ENCODE measurements at regions of chr5 and their contacts with region 1.

Region 1: GRCh38 chr5:153147891-153148623 is 342.4 kb upstream of the GRIA1 start:
- DNase-seq: peak in 1 of 2 experiments; percentile 52
- H3K4me3 ChIP-seq: no peak overlapping the region
- H3K27ac ChIP-seq: no peak overlapping the region
- H3K4me1 ChIP-seq: no peaks in the 10 kb centered on the region
- H3K27me3 ChIP-seq: no peaks in the 10 kb centered on the region
- CTCF ChIP-seq: peak in 2 of 3 experiments; percentile 71 to 80; a peak in 3 of 4 replicates
- EP300 ChIP-seq: no peak
- POLR2A ChIP-seq: no peak
- RAD21 ChIP-seq: peak; percentile 93 to 95

Region 2: DNA sequence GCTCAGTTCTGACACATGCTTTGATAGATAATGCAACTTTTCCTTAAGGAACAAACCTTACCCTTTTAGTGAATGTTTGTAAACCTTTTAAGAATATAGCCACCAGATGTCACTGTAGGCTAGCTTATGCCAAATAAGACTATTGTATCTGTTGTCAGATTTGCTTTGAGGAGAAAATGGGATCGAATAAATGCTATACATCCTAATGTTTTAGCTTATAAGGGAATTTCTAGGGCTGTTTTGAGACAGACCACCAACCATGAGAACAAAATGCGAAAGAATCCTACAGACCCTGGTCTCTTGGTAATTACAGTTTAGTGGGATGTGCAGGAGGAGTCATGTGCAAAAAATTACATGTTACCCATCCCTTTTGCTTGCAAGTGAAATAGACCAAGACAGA is 615.3 kb before region 1 on chr5:
- CTCF ChIA-PET with region 1: interaction called, 11 read pairs
- POLR2A ChIA-PET with region 1: no interaction called
- DNase-seq: no peak
- H3K4me3 ChIP-seq: no peak overlapping the region
- H3K27ac ChIP-seq: no peak overlapping the region
- H3K4me1 ChIP-seq: peaks cover 0 to 15% (median 4%) of the 10 kb centered on the region in 4 experiments; a peak in 5 of 7 replicates
- H3K27me3 ChIP-seq: no peaks in the 10 kb centered on the region
- CTCF ChIP-seq: peak in 2 of 3 experiments; percentile 45 to 46; a peak in 2 of 4 replicates
- EP300 ChIP-seq: no peak
- POLR2A ChIP-seq: no peak
- RAD21 ChIP-seq: peak; percentile 85 to 90

Region 3: GRCh38 chr5:152560512-152561137 is 587.4 kb before region 1 on chr5:
- CTCF ChIA-PET with region 1: interaction called, 34 read pairs
- POLR2A ChIA-PET with region 1: no interaction called
- DNase-seq: peak; percentile 41 to 78
- H3K4me3 ChIP-seq: no peak overlapping the region
- H3K27ac ChIP-seq: no peak overlapping the region
- H3K4me1 ChIP-seq: no peaks in the 10 kb centered on the region
- H3K27me3 ChIP-seq: no peaks in the 10 kb centered on the region
- CTCF ChIP-seq: peak; percentile 77 to 87 (median 85)
- EP300 ChIP-seq: no peak
- POLR2A ChIP-seq: no peak
- RAD21 ChIP-seq: peak; percentile 95 to 98

Region 4: DNA sequence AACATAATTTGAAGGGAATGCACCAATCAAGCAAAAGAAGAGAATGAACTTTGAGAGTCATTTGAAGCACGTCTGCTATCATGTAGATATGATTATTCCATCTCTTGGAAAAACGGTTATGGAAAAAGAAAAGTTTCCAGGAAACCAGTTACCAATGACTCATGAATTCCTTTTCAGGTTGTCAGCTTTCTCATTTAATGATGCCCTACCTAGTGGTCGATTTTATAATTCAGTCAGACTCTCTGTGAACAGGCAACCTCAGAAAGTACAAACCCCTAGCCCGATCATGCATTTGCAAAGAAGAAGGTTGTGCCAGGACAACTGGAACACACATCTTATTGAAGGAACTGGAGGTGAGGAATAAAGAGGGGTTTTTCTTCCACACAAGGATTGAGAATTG is 12.6 kb before region 1 on chr5:
- CTCF ChIA-PET with region 1: interaction called, 10 read pairs
- POLR2A ChIA-PET with region 1: no interaction called
- DNase-seq: no peak
- H3K4me3 ChIP-seq: no peak overlapping the region
- H3K27ac ChIP-seq: no peak overlapping the region
- H3K4me1 ChIP-seq: no peaks in the 10 kb centered on the region
- H3K27me3 ChIP-seq: peaks cover 0 to 1% (median 0%) of the 10 kb centered on the region in 4 experiments; a peak in 1 of 7 replicates
- CTCF ChIP-seq: no peak
- EP300 ChIP-seq: no peak
- POLR2A ChIP-seq: no peak
- RAD21 ChIP-seq: no peak

Region 5: DNA sequence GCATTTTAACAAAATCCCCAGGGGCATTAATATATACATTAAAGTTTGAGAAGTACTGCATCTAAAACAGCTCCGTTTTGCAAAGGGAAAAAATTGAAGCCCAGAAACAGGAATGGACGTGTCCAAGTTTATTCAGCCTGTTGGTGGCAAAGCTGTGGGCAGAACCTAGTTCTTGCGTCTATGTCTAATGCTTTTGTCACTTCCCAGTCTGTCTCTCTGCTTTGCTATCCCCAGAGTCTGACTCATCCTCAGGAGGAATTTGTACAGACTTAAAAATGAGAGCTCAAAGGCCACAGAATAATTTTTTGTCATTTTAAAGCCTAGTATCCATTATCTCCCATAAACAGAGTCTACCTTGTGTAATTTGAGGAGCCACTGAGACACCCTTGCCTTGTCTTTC is 11.6 kb after region 1 on chr5:
- CTCF ChIA-PET with region 1: interaction called, 13 read pairs
- POLR2A ChIA-PET with region 1: no interaction called
- DNase-seq: no peak
- H3K4me3 ChIP-seq: no peak overlapping the region
- H3K27ac ChIP-seq: no peak overlapping the region
- H3K4me1 ChIP-seq: peaks cover 0 to 2% (median 0%) of the 10 kb centered on the region in 4 experiments; a peak in 1 of 7 replicates
- H3K27me3 ChIP-seq: no peaks in the 10 kb centered on the region
- CTCF ChIP-seq: no peak
- EP300 ChIP-seq: no peak
- POLR2A ChIP-seq: no peak
- RAD21 ChIP-seq: no peak